Activated naive CD4-positive, alpha-beta T cell treated with anti-CD3 and anti-CD28 coated beads, Interleukin-2, amount 10 ng/mL, durations not matched to agents 7 days and 5 days (primary cell): ENCODE measurements at regions of chr2 and their contacts with region 1.

Region 1: DNA sequence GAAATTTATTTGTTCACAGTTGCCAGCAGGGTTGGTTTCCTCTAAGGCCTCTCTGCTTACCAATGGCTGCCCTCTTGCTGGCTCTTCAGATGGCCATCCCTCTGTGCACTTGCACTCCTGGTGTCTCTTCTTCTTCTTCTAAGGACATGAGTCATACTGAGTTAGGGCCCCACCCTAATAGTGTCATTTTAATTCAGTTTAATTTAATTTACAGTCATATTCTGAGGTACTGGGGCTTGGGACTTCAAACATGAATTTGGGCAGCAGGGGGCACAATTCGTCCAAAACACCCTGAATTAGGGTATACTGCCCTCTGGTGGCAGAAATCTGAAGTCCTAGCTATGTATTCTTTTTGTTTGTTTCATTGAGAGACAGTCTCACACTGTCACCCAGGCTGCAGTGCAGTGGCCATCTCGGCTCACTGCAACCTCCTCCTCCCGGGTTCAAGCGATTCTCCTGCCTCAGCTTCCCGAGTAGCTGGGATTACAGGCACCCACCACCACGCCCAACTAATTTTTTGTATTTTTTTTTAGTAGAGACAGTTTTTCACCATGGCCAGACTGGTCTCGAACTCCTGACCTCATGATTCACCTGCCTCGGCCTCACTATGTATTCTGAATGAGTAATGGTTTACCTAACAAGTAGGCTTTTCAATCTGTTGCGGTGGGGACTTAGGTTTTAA is 19.8 kb downstream of the SLC4A1AP start:
- DNase-seq: peak; percentile 93
- H3K4me3 Mint-ChIP-seq: no peak overlapping the region
- H3K27ac Mint-ChIP-seq: peak overlapping the region; percentile 83
- H3K4me1 Mint-ChIP-seq: peaks cover 20% of the 10 kb centered on the region
- H3K27me3 Mint-ChIP-seq: no peaks in the 10 kb centered on the region

Region 2: DNA sequence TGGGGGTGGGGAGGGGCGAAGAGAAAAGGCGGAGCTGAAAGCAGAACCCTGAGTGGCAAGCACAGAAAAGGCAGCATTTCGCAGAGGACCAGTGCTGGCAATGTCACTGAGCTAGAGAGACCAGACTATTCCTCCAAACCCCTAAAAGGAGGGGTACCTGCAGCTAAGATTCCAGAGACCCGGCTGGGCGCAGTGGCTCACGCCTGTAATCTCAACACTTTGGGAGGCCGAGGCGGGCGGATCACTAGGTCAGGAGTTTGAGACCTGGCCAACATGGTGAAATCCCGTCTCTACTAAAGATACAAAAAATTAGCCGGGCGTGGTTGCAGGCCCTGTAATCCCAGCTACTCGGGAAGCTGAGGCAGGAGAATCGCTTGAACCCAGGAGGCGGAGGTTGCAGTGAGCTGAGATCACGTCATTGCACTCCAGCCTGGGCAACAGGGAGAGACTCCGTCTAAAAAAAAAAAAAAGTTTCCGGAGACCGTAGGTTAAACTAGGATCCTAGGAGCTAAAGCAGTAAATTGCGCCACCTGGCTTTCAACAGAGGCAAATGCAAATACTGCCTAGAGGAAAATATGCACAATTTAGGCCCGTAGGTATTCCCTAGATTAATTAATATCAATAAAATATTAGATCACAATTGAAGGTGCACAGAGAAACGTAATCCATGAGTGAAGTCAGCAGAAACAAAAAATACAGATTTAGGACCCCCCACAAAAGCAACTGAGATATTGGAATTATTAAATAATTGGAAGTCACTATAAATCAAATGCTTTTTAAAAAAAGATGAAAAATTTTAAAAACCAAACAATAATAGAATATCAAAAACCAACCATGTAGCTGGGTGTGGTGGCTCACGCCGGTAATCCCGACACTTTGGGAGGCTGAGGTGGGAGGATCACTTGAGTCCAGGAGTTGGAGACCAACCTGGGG is 380.2 kb before region 1 on chr2:
- CTCF ChIA-PET with region 1: interaction called, 21 read pairs
- DNase-seq: peak; percentile 60
- H3K4me3 Mint-ChIP-seq: peak overlapping the region; percentile 62
- H3K27ac Mint-ChIP-seq: no peak overlapping the region
- H3K4me1 Mint-ChIP-seq: peaks cover 9% of the 10 kb centered on the region
- H3K27me3 Mint-ChIP-seq: peaks cover 55% of the 10 kb centered on the region

Region 3: GRCh38 chr2:27409321-27410073 is 274.0 kb before region 1 on chr2 and contains the start of gene PPM1G:
- CTCF ChIA-PET with region 1: interaction called, 11 read pairs
- DNase-seq: peak; percentile 98
- H3K4me3 Mint-ChIP-seq: peak within 1 kb of the TSS; percentile 81
- H3K27ac Mint-ChIP-seq: peak within 1 kb of the TSS; percentile 88
- H3K4me1 Mint-ChIP-seq: peaks cover 43% of the 10 kb centered on the region
- H3K27me3 Mint-ChIP-seq: peaks cover 9% of the 10 kb centered on the region

Region 4: DNA sequence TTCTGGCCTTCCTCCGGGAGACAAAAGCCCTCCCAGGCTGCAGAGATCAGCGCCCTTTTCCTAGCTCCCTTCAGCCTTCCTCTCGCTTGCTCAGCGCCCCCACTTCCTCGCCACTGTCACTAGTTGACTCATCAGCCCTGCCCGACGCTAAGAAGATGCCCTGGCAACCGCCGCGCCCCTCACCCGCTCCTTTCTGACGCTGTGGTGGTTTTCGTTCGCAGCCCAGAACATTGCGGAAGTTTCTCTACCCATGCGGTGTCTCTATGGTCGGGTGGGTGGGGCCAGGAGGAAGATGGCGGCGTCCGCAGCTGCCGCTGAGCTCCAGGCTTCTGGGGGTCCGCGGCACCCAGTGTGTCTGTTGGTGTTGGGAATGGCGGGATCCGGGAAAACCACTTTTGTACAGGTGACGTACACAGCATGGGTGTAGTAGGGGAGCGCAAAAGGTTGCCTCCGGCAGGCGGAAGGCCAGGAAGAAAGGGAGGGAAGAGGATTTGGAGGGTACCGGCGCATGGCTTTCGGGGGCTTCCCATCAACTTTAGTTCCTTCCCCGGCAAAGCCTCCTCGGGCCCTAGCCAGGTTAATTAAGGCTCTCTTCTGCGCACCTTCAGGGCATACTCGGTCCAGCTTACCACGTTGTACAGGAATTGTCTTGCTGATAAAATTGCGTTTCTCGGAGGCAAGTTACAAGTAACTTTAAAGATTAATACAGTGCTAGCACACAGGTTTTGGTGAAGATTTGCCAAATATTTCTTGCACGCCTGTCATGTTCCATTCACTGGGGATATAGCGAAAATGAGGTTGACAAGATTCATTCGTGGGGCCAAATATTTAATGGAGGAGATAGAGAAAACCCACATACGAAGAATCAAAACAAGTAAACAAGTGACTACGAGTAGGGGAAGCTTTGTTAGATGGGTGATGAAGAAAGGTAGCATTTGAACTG is 54.5 kb before region 1 on chr2 and contains the starts of genes CCDC121 and GPN1:
- CTCF ChIA-PET with region 1: interaction called, 13 read pairs
- DNase-seq: peak; percentile 98
- H3K4me3 Mint-ChIP-seq: no peak within 1 kb of the TSS
- H3K27ac Mint-ChIP-seq: no peak within 1 kb of the TSS
- H3K4me1 Mint-ChIP-seq: peaks cover 33% of the 10 kb centered on the region
- H3K27me3 Mint-ChIP-seq: no peaks in the 10 kb centered on the region

Region 5: GRCh38 chr2:27663463-27664249 is 19.9 kb before region 1 on chr2 and contains the starts of genes SLC4A1AP and SUPT7L:
- CTCF ChIA-PET with region 1: interaction called, 16 read pairs
- DNase-seq: peak; percentile 80
- H3K4me3 Mint-ChIP-seq: peak within 1 kb of the TSS; percentile 99
- H3K27ac Mint-ChIP-seq: peak within 1 kb of the TSS; percentile 99
- H3K4me1 Mint-ChIP-seq: peaks cover 41% of the 10 kb centered on the region
- H3K27me3 Mint-ChIP-seq: no peaks in the 10 kb centered on the region

Region 6: DNA sequence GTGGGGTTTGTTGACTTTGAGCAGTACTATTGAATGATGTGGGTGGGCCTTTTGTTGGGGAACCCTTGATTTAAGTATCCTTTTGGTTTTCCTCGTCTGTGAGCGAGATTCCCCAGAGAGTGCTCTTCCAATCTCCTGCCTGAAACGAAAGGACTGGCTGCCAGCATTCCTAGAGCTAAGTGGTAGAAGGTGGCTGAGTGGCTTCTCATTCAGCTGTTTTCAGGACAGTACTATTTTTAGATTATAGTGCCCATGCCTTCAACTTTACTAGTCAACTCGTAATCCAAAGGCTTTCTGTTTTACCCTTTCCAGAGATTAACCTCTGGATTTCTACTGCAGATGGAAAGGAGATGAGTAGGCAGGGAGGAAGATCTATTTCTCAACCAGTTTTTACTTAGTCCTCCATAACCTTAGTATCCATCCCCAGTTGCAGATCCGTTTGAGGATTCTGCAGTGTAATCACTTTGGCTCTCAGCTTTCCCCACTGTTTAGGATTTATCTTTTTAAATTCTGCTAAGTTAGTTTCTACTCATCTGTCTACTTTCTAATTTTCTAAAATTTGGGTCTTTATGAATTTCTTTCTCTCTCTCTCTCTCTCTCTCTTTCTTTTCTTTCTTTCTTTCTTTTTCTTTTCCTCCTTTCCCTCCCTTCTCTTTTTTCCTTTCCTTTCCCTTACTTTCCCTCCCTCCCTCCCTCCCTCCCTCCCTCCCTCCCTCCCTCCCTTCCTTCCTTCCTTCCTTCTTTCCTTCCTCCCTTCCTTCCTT is 10.6 kb before region 1 on chr2:
- CTCF ChIA-PET with region 1: interaction called, 11 read pairs
- DNase-seq: no peak
- H3K4me3 Mint-ChIP-seq: no peak overlapping the region
- H3K27ac Mint-ChIP-seq: no peak overlapping the region
- H3K4me1 Mint-ChIP-seq: peaks cover 4% of the 10 kb centered on the region
- H3K27me3 Mint-ChIP-seq: no peaks in the 10 kb centered on the region

Region 7: GRCh38 chr2:27703638-27704341 is 20.3 kb after region 1 on chr2:
- CTCF ChIA-PET with region 1: interaction called, 36 read pairs
- DNase-seq: peak; percentile 91
- H3K4me3 Mint-ChIP-seq: no peak overlapping the region
- H3K27ac Mint-ChIP-seq: no peak overlapping the region
- H3K4me1 Mint-ChIP-seq: peaks cover 10% of the 10 kb centered on the region
- H3K27me3 Mint-ChIP-seq: peaks cover 12% of the 10 kb centered on the region